Ovary (tissue), 10 donors: ENCODE measurements at regions of chr2 and their contacts with region 1.

Region 1: GRCh38 chr2:64653349-64654062 is at the start of gene SERTAD2:
- DNase-seq: peak; percentile 87 to 93 (median 91)
- H3K4me3 ChIP-seq: peak within 1 kb of the TSS; percentile 85
- H3K27ac ChIP-seq: peak within 1 kb of the TSS; percentile 94 to 98
- H3K4me1 ChIP-seq: peaks cover 9% of the 10 kb centered on the region
- H3K27me3 ChIP-seq: no peaks in the 10 kb centered on the region
- CTCF ChIP-seq: no peak
- EP300 ChIP-seq: no peak
- POLR2A ChIP-seq: peak; percentile 72
- total RNA-seq, gene SERTAD2: 11.0 to 26.8 (median 21.8) TPM

Region 2: DNA sequence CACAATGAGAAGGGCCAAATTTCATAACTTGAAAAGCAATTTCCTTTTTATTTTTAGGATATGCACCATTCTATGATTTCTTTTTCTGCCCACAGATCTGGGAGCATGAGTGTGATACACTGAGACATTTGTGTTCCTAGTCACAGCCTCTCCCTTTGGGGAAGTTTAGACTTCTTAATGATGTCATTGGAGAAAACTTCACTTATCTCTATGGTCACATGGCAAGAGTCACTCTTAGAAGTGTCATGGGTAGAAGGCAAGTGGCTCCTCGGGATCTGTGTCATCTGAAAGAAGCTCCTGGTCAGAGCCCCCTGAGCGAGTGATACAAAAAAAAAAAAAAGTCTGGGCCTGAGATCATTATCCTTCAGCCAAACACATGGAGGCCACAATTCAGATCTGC is 262.1 kb before region 1 on chr2:
- intact Hi-C with region 1: no loop called
- DNase-seq: no peak
- H3K4me3 ChIP-seq: no peak overlapping the region
- H3K27ac ChIP-seq: no peak overlapping the region
- H3K4me1 ChIP-seq: no peaks in the 10 kb centered on the region
- H3K27me3 ChIP-seq: no peaks in the 10 kb centered on the region
- CTCF ChIP-seq: no peak
- EP300 ChIP-seq: no peak
- POLR2A ChIP-seq: no peak

Region 3: DNA sequence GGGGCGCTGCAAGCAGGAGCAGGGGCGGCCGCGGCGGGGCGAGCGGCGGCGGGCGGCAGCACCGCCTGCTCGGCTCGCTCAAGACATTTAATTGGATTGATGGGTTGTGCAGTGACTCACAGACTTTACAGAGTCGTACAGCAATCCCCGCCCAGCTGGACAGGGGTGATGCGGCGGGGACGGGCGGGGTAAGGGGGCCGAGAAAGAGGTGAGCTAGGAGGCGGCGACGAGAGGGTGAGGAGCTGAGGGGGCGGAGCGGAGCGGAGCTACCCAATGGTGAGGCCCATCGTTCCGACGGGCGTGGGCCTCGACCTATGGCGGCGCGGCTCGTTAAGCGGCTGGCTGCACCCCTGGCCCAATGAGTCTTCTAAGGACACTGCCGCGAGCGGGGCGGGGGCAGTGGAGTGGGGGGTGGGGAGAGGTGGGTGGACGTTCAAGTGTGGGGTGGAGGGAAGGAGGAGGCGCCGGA is 97.3 kb after region 1 on chr2:
- intact Hi-C with region 1: loop called in 3 of 4 experiments (anchors 1 to 5 kb)
- DNase-seq: peak; percentile 99
- H3K4me3 ChIP-seq: peak overlapping the region; percentile 74
- H3K27ac ChIP-seq: peak overlapping the region; percentile 74 to 96
- H3K4me1 ChIP-seq: peaks cover 7% of the 10 kb centered on the region
- H3K27me3 ChIP-seq: no peaks in the 10 kb centered on the region
- CTCF ChIP-seq: no peak
- EP300 ChIP-seq: peak; percentile 7
- POLR2A ChIP-seq: peak; percentile 97

Region 4: DNA sequence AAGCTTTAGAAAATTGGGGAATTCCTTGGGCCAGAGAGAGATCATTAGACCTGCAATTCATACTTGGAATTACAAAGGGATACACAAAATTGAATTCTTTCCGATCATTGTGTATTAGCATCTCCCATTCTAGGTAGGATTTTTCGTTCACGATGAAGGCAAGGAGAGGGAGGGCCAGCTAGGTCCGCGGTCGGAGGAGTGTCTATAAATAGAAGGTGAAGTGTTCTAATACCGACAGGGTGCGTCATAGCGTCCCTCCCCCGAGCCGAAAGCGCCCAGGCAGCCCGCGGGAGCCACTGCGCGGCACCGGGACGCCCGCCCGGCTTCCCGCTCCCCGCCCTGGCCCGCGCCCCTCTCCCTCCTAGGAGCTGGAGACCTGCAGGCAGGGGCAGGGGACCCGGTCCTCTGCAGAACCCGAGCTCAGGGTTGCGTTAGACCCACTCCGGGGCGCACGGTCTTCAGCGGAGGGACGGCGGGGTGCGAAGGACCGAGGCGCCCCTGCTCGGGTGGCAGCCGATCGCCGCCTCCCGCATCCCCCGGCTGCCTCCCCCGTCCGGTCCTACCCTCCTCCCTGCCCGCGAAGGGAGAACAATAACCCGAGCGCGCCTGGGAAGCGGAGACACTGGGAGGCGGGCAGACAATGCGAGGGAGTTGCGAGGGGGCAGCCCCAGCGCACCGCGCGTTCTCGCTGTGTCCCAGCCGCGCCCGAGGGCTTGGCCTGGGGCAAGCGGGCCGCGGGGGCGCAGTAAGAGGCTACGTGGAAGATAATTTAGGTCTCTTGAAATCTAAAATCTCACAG is 114.4 kb after region 1 on chr2:
- intact Hi-C with region 1: loop called in 2 of 4 experiments (anchors 5 kb)
- DNase-seq: peak; percentile 89 to 93 (median 91)
- H3K4me3 ChIP-seq: peak overlapping the region; percentile 66
- H3K27ac ChIP-seq: peak overlapping the region; percentile 89 to 95
- H3K4me1 ChIP-seq: peaks cover 2% of the 10 kb centered on the region
- H3K27me3 ChIP-seq: no peaks in the 10 kb centered on the region
- CTCF ChIP-seq: no peak
- EP300 ChIP-seq: no peak
- POLR2A ChIP-seq: peak; percentile 88